Right ventricle myocardium inferior (tissue), 1 donor: ENCODE measurements at regions of chr7 and their contacts with region 1.

Region 1: GRCh38 chr7:84314263-84314662 is 119.7 kb upstream of the SEMA3A start:
- DNase-seq: no peak
- ATAC-seq: no peak

Region 2: GRCh38 chr7:84297616-84298015 is 16.6 kb before region 1 on chr7:
- intact Hi-C with region 1: loop called (anchors 2 kb)
- DNase-seq: no peak
- ATAC-seq: no peak

Region 3: GRCh38 chr7:84364708-84365107 is 50.4 kb after region 1 on chr7:
- intact Hi-C with region 1: no loop called
- DNase-seq: no peak
- ATAC-seq: no peak